Panc1 (cell line): ENCODE measurements at regions of chr3 and their contacts with region 1.

Region 1: GRCh38 chr3:43638594-43639447 is 17.0 kb upstream of the ANO10 start:
- DNase-seq: no peak
- ATAC-seq: no peak
- H3K4me3 ChIP-seq: no peak overlapping the region
- H3K27ac ChIP-seq: no peak overlapping the region
- H3K4me1 ChIP-seq: no peaks in the 10 kb centered on the region
- H3K27me3 ChIP-seq: no peaks in the 10 kb centered on the region
- CTCF ChIP-seq: peak; percentile 48

Region 2: GRCh38 chr3:42898882-42899675 is 739.7 kb before region 1 on chr3:
- CTCF ChIA-PET with region 1: no interaction called
- POLR2A ChIA-PET with region 1: no interaction called
- in situ Hi-C with region 1: no loop called
- intact Hi-C with region 1: no loop called
- DNase-seq: no peak
- ATAC-seq: no peak
- H3K4me3 ChIP-seq: no peak overlapping the region
- H3K27ac ChIP-seq: no peak overlapping the region
- H3K4me1 ChIP-seq: no peaks in the 10 kb centered on the region
- H3K27me3 ChIP-seq: no peaks in the 10 kb centered on the region
- CTCF ChIP-seq: no peak

Region 3: GRCh38 chr3:43465087-43465486 is 173.7 kb before region 1 on chr3:
- CTCF ChIA-PET with region 1: no interaction called
- POLR2A ChIA-PET with region 1: no interaction called
- in situ Hi-C with region 1: no loop called
- intact Hi-C with region 1: no loop called
- DNase-seq: peak; percentile 15
- ATAC-seq: no peak
- H3K4me3 ChIP-seq: no peak overlapping the region
- H3K27ac ChIP-seq: no peak overlapping the region
- H3K4me1 ChIP-seq: no peaks in the 10 kb centered on the region
- H3K27me3 ChIP-seq: no peaks in the 10 kb centered on the region
- CTCF ChIP-seq: no peak

Region 4: GRCh38 chr3:43621656-43622432 is 17.0 kb before region 1 on chr3 and contains the start of gene ANO10:
- CTCF ChIA-PET with region 1: no interaction called
- POLR2A ChIA-PET with region 1: interaction called, 10 read pairs
- in situ Hi-C with region 1: no loop called
- intact Hi-C with region 1: no loop called
- DNase-seq: peak; percentile 85
- ATAC-seq: peak; percentile 97
- H3K4me3 ChIP-seq: peak within 1 kb of the TSS; percentile 73 to 79
- H3K27ac ChIP-seq: peak within 1 kb of the TSS; percentile 75
- H3K4me1 ChIP-seq: peaks cover 3% of the 10 kb centered on the region; the same call in 1 of the 2 replicates
- H3K27me3 ChIP-seq: no peaks in the 10 kb centered on the region
- CTCF ChIP-seq: no peak
- total RNA-seq, gene ANO10: 26.6 TPM